ENCODE measurements at regions of chr15 and their contacts with region 1.

Region 1: GRCh38 chr15:51750792-51751685 is at the start of gene TMOD2:
- DNase-seq: peak in 25 of 35 experiments; percentile 15 to 65 (median 35)
- ATAC-seq: peak; percentile 92 to 95 (median 94)
- H3K4me3 ChIP-seq: peak within 1 kb of the TSS; percentile 54 to 77
- H3K4me3 Mint-ChIP-seq: peak within 1 kb of the TSS; percentile 84 to 86 (median 84)
- H3K27ac ChIP-seq: no peak within 1 kb of the TSS
- H3K27ac Mint-ChIP-seq: peak within 1 kb of the TSS; percentile 32 to 48
- H3K4me1 ChIP-seq: peaks cover 14% of the 10 kb centered on the region in 2 experiments
- H3K4me1 Mint-ChIP-seq: peaks cover 40 to 53% (median 44%) of the 10 kb centered on the region in 3 donors
- H3K27me3 ChIP-seq: peaks cover 0 to 3% of the 10 kb centered on the region in 2 experiments
- H3K27me3 Mint-ChIP-seq: peaks cover 0 to 4% of the 10 kb centered on the region in 2 donors
- total RNA-seq, gene TMOD2: 10.9 to 17.2 (median 16.8) TPM

Region 2: GRCh38 chr15:51475736-51476135 is 275.3 kb before region 1 on chr15:
- CTCF ChIA-PET with region 1: no interaction called
- POLR2A ChIA-PET with region 1: no interaction called
- DNase-seq: no peak
- ATAC-seq: no peak
- H3K4me3 ChIP-seq: no peak overlapping the region
- H3K4me3 Mint-ChIP-seq: no peak overlapping the region
- H3K27ac ChIP-seq: no peak overlapping the region
- H3K27ac Mint-ChIP-seq: no peak overlapping the region
- H3K4me1 ChIP-seq: no peaks in the 10 kb centered on the region
- H3K4me1 Mint-ChIP-seq: no peaks in the 10 kb centered on the region
- H3K27me3 ChIP-seq: no peaks in the 10 kb centered on the region
- H3K27me3 Mint-ChIP-seq: no peaks in the 10 kb centered on the region

Region 3: GRCh38 chr15:51677452-51677851 is 73.6 kb before region 1 on chr15:
- CTCF ChIA-PET with region 1: no interaction called
- POLR2A ChIA-PET with region 1: interaction called in 1 of 2 experiments, 10 read pairs
- DNase-seq: no peak
- ATAC-seq: no peak
- H3K4me3 ChIP-seq: no peak overlapping the region
- H3K4me3 Mint-ChIP-seq: no peak overlapping the region
- H3K27ac ChIP-seq: no peak overlapping the region
- H3K27ac Mint-ChIP-seq: no peak overlapping the region
- H3K4me1 ChIP-seq: peaks cover 0 to 7% of the 10 kb centered on the region in 2 experiments
- H3K4me1 Mint-ChIP-seq: peaks cover 4 to 7% (median 7%) of the 10 kb centered on the region in 3 donors
- H3K27me3 ChIP-seq: peaks cover 0 to 8% of the 10 kb centered on the region in 2 experiments
- H3K27me3 Mint-ChIP-seq: peaks cover 33 to 39% of the 10 kb centered on the region in 2 donors

Region 4: GRCh38 chr15:51737280-51738017 is 13.6 kb before region 1 on chr15 and contains the start of gene LYSMD2:
- CTCF ChIA-PET with region 1: interaction called in 1 of 2 experiments, 3 read pairs
- POLR2A ChIA-PET with region 1: interaction called in 1 of 2 experiments, 12 read pairs
- DNase-seq: peak; percentile 21 to 78 (median 57)
- ATAC-seq: peak; percentile 67 to 79 (median 74)
- H3K4me3 ChIP-seq: peak within 1 kb of the TSS; percentile 62 to 67
- H3K4me3 Mint-ChIP-seq: peak within 1 kb of the TSS; percentile 85 to 91 (median 90)
- H3K27ac ChIP-seq: peak within 1 kb of the TSS; percentile 90
- H3K27ac Mint-ChIP-seq: peak within 1 kb of the TSS; percentile 97
- H3K4me1 ChIP-seq: peaks cover 41 to 54% of the 10 kb centered on the region in 2 experiments
- H3K4me1 Mint-ChIP-seq: peaks cover 60 to 65% (median 63%) of the 10 kb centered on the region in 3 donors
- H3K27me3 ChIP-seq: no peaks in the 10 kb centered on the region
- H3K27me3 Mint-ChIP-seq: no peaks in the 10 kb centered on the region
- total RNA-seq, gene LYSMD2: 16.6 to 36.2 (median 26.2) TPM